Naive thymus-derived CD8-positive, alpha-beta T cell (primary cell): ENCODE measurements at regions of chr9 and their contacts with region 1.

Region 1: DNA sequence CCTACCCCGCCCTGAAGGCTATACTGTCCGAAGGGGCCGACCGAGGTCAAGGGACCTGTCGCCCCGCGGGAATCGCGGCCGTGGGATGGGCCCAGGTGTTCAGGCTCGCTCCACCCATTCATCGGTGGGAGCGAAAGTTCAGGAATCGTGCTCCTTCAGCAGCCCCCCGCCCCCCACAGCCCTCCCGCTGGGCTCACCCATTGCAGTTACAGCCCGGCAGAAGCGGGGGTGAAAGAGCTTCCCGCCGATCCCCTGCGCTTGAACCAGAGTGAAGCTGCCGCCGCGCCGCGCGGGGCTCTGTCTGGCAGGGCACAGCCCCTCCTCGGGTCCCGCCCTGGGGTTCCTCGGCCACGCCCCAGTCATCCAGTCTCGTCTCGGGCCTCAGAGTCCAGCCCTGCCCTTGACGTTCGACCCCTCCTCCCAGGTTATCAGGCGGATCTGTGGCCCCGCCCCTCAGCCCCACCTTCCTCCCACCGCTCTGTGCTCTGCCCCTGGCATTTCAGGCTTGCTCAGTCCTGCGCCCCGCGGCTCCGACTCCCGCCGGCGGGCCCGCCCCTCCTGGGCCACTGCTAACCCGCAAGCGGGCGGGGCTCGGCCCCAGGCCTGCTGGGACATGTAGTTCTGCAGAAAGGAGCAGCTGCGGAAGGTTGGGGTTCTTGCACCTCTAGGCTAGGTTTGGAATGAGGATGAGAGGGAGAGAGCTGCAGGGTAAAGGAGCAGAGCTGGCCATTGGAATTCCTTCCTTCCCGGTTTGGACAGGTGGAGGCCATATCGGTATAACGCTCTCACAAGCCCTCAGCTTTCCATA is at the start of gene MYORG:
- DNase-seq: peak; percentile 85 to 98 (median 95)
- ATAC-seq: peak; percentile 76 to 80
- H3K4me3 Mint-ChIP-seq: peak within 1 kb of the TSS; percentile 83 to 95 (median 93)
- H3K27ac Mint-ChIP-seq: peak within 1 kb of the TSS; percentile 36 to 92 (median 88)
- H3K4me1 Mint-ChIP-seq: peaks cover 29 to 55% (median 50%) of the 10 kb centered on the region in 4 donors
- H3K27me3 Mint-ChIP-seq: no peaks in the 10 kb centered on the region
- polyA plus RNA-seq, gene MYORG: 0.17 to 0.39 (median 0.37) TPM

Region 2: DNA sequence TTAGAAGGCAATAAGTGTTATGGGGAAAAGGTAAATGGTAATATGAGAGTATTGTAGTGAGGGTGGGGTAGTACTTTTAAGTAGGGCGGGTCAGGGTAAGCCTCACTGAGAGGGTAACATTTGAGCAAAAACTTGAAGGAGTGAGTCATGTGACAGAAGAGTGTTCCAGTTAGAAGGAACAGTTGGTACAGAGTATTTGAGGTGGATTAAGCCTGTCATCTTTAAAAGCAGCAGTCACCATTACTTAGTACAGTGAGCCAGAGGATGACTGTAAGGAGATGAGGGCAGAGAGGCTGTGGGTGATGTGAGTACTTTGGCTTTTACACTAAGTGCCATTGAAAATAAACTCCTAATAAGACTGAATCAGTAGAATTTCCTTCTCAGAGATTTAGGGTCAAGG is 143.1 kb before region 1 on chr9:
- POLR2A ChIA-PET with region 1: no interaction called
- DNase-seq: no peak
- ATAC-seq: no peak
- H3K4me3 Mint-ChIP-seq: no peak overlapping the region
- H3K27ac Mint-ChIP-seq: peak overlapping the region in 2 of 10 donors; percentile 19 to 47
- H3K4me1 Mint-ChIP-seq: peaks cover 9 to 26% (median 16%) of the 10 kb centered on the region in 4 donors
- H3K27me3 Mint-ChIP-seq: no peaks in the 10 kb centered on the region

Region 3: DNA sequence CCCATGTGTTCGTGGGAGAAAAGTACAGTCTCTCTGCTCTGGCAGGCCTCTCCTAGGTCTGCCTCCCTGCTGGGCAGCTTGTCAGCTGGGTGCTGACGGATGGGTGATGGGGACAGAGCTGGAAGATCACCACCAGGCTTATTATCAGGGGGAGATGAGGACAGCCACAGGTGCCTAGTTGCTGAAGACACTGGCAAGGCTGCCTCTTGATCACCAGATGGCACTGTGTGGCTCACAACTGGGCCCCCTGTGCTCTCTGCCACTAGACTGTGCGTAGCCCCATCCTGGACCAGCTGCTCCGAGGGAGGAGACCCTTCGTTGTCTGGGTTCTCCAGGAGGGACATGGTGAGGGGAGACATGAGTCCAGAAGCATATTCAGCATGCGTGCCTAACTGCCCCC is 120.7 kb before region 1 on chr9:
- POLR2A ChIA-PET with region 1: interaction called, 22 read pairs
- DNase-seq: no peak
- ATAC-seq: peak in 1 of 2 donors; percentile 35
- H3K4me3 Mint-ChIP-seq: peak overlapping the region in 3 of 10 donors; percentile 45 to 72 (median 68)
- H3K27ac Mint-ChIP-seq: peak overlapping the region; percentile 22 to 94 (median 90)
- H3K4me1 Mint-ChIP-seq: peaks cover 18 to 47% (median 34%) of the 10 kb centered on the region in 4 donors
- H3K27me3 Mint-ChIP-seq: no peaks in the 10 kb centered on the region

Region 4: DNA sequence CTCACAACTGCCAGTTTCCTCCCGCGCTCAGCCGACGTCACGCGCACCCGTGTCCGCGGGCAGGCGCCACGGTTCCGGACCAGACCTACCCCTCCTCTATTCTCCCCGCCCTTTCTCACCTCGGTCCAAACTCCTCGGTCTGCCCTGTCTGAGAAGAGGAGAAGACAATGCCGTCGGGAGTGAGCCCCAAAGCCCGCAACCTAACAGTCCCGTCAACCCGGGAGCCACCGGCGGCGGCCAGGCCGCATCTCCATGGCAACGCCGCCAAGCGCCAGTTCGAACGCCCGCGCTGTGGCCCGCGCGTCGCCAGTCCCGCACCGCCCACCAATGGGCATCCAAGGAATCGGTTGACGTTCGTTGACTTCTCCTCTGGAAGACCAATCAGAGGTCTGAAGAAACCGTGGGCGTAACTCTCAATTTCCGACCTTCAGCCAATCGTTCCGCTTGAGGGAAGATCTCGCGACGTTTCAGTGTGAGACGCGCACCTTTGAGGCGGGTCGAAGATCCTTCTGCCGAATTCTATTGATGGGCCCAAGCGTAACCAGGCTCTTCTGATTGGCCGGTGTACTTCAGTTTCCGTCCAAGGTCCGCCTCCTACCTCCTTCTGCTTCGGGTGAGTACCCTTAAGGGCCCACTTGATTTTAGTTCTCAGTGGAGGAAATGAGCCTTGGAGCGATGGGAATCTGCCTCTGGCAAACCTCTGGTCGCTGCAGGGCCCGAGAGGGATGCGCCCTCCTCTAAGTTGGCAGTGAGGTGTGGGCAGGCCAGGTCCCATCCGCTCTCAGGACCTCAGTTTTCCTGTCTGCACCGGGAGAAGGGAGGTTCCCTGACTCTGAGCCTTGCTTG is 47.6 kb before region 1 on chr9 and contains the starts of genes KIF24 and NUDT2:
- POLR2A ChIA-PET with region 1: interaction called, 27 read pairs
- DNase-seq: peak; percentile 89 to 99 (median 96)
- ATAC-seq: peak; percentile 93
- H3K4me3 Mint-ChIP-seq: peak within 1 kb of the TSS; percentile 85 to 97 (median 95)
- H3K27ac Mint-ChIP-seq: peak within 1 kb of the TSS; percentile 77 to 98 (median 96)
- H3K4me1 Mint-ChIP-seq: peaks cover 15 to 36% (median 35%) of the 10 kb centered on the region in 4 donors
- H3K27me3 Mint-ChIP-seq: no peaks in the 10 kb centered on the region
- polyA plus RNA-seq, gene KIF24: not detected
- polyA plus RNA-seq, gene NUDT2: 28.0 to 71.2 (median 35.1) TPM

Region 5: DNA sequence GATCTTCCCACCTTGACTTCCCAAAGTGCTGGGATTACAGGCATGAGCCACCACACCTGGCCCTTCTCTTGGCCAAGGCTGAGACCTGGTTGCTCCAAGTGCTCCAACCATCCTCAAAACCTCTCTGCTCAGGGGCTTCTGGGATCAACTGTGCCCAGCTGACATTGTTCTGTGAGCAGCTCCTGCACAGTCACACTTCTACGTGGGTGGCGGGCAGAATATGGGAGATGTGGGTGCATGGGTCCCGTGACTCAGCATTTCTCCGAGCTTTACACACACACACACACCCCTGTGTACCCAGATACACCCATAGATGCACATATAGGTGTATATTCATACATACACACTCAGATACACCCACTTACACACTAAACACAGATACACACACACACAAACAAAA is 10.4 kb after region 1 on chr9:
- POLR2A ChIA-PET with region 1: no interaction called
- DNase-seq: no peak
- ATAC-seq: no peak
- H3K4me3 Mint-ChIP-seq: no peak overlapping the region
- H3K27ac Mint-ChIP-seq: no peak overlapping the region
- H3K4me1 Mint-ChIP-seq: peaks cover 0 to 6% (median 3%) of the 10 kb centered on the region in 4 donors
- H3K27me3 Mint-ChIP-seq: peaks cover 0 to 12% (median 0%) of the 10 kb centered on the region in 5 donors